CD4-positive, alpha-beta T cell (primary cell): ENCODE measurements at regions of chr10 and their contacts with region 1.

Region 1: GRCh38 chr10:22615819-22616499 is 98.4 kb downstream of the PIP4K2A start:
- DNase-seq: peak in 8 of 14 experiments; percentile 22 to 78 (median 44)
- ATAC-seq: peak; percentile 29
- H3K4me3 ChIP-seq: peak overlapping the region; percentile 31
- H3K4me3 Mint-ChIP-seq: peak overlapping the region; percentile 58
- H3K27ac ChIP-seq: peak overlapping the region in 1 of 2 donors; percentile 68
- H3K27ac Mint-ChIP-seq: peak overlapping the region; percentile 98
- H3K4me1 ChIP-seq: peaks cover 80% of the 10 kb centered on the region
- H3K4me1 Mint-ChIP-seq: peaks cover 98% of the 10 kb centered on the region
- H3K27me3 ChIP-seq: no peaks in the 10 kb centered on the region
- H3K27me3 Mint-ChIP-seq: no peaks in the 10 kb centered on the region
- CTCF ChIP-seq: no peak

Region 2: DNA sequence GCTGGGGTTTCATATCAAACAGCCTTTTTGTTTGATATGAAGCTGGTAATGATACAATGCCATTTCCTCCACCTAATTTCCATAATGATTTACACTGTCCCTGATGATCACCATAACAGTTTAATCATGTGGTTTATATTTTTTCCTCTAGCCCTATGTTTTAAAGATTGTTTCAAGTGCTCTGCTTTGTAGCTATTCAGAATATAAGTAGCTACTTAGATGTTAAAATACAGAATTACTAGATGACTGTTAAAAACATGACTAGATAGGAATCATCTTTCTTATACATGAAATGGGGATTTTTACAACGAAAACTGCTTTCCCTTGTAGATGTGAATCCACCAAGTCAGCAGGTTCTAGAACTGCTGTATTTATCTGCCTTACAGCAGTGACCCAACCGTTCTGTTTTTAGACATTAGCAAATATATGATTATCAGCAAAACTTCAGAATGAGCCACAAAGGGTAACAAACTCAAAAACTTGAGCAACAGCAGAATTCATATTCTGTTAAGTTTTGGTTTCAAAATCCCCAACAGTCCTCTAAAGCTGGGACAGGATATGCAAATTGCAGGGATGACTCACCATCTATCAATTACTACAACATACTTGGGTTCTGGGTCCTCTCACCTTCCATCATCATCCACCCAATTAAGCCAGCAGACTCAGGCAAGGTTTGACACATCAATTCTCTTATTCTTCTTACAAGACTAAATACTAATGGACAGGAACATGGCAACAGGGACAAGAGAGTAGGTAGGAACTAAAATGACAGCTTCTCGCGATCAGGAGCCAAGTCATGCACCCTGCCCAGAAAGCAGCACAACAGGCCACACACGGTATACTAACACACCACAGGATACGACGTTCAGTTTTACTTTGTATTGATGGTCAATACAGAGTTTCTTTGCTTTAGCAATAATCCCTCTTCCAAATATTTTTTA is 14.5 kb after region 1 on chr10:
- CTCF ChIA-PET with region 1: interaction called, 18 read pairs
- POLR2A ChIA-PET with region 1: interaction called, 49 read pairs
- intact Hi-C with region 1: loop called (anchors 1 to 2 kb)
- DNase-seq: peak in 4 of 14 experiments; percentile 55 to 89 (median 86)
- ATAC-seq: peak; percentile 87
- H3K4me3 ChIP-seq: peak overlapping the region; percentile 42
- H3K4me3 Mint-ChIP-seq: peak overlapping the region; percentile 63
- H3K27ac ChIP-seq: peak overlapping the region; percentile 82 to 87
- H3K27ac Mint-ChIP-seq: peak overlapping the region; percentile 90
- H3K4me1 ChIP-seq: peaks cover 67% of the 10 kb centered on the region
- H3K4me1 Mint-ChIP-seq: peaks cover 99% of the 10 kb centered on the region
- H3K27me3 ChIP-seq: no peaks in the 10 kb centered on the region
- H3K27me3 Mint-ChIP-seq: no peaks in the 10 kb centered on the region
- CTCF ChIP-seq: no peak

Region 3: GRCh38 chr10:22655311-22655981 is 39.5 kb after region 1 on chr10:
- CTCF ChIA-PET with region 1: interaction called, 17 read pairs
- POLR2A ChIA-PET with region 1: interaction called, 55 read pairs
- intact Hi-C with region 1: loop called (anchors 1 to 5 kb)
- DNase-seq: peak in 12 of 14 experiments; percentile 17 to 81 (median 51)
- ATAC-seq: peak; percentile 74
- H3K4me3 ChIP-seq: peak overlapping the region; percentile 27
- H3K4me3 Mint-ChIP-seq: peak overlapping the region; percentile 82
- H3K27ac ChIP-seq: peak overlapping the region; percentile 58 to 67
- H3K27ac Mint-ChIP-seq: peak overlapping the region; percentile 91
- H3K4me1 ChIP-seq: peaks cover 92% of the 10 kb centered on the region
- H3K4me1 Mint-ChIP-seq: peaks cover 96% of the 10 kb centered on the region
- H3K27me3 ChIP-seq: no peaks in the 10 kb centered on the region
- H3K27me3 Mint-ChIP-seq: no peaks in the 10 kb centered on the region
- CTCF ChIP-seq: no peak

Region 4: GRCh38 chr10:22676435-22676834 is 60.5 kb after region 1 on chr10:
- CTCF ChIA-PET with region 1: no interaction called
- POLR2A ChIA-PET with region 1: interaction called, 28 read pairs
- intact Hi-C with region 1: no loop called
- DNase-seq: no peak
- ATAC-seq: no peak
- H3K4me3 ChIP-seq: no peak overlapping the region
- H3K4me3 Mint-ChIP-seq: peak overlapping the region; percentile 52
- H3K27ac ChIP-seq: peak overlapping the region in 1 of 2 donors; percentile 18
- H3K27ac Mint-ChIP-seq: peak overlapping the region; percentile 99
- H3K4me1 ChIP-seq: peaks cover 68% of the 10 kb centered on the region
- H3K4me1 Mint-ChIP-seq: peaks cover 99% of the 10 kb centered on the region
- H3K27me3 ChIP-seq: no peaks in the 10 kb centered on the region
- H3K27me3 Mint-ChIP-seq: no peaks in the 10 kb centered on the region
- CTCF ChIP-seq: no peak